ENCODE measurements at regions of chr19 and their contacts with region 1.

Region 1: DNA sequence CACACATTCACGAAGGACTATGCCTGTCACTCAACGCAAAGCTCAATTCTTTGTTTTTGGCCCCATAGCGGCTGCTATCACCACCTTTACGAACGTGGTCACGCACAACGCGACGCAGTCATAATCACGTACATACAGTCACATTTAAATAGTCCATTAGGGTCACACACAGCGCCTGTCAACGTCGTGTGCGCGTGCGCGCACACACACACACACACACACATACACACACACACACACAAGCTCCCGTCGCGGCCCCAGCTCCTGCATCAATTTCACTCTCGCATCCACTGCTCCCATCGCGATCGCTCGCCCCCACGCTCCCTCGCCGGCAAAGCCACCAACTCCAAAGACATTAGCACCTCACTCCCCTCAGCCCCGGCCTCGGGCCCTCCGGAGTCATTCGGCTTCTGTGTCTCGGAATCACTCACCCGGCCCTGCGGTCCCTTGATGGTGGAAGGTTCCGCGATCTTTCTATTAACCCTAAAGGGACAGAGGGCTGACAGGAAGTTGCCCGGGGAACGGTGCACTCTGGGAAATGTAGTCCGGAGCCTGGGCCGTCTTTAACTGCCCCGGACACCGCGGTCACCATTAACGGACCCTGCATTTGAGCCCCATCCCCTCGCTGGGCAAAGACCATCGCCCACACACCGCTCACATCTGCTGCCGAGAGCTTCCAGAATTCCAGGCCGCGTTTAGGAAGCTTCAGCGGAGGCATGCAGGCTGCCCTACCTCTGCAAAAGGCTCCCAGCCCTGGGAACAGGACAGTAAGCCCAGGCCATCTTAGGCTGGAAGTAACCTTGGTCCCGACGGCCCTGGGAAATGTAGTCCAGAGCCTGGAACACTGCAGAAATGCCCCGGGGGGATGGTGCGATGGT is at the start of gene ZNF790:
- DNase-seq: peak; percentile 94
- H3K4me3 ChIP-seq: peak within 1 kb of the TSS; percentile 58 to 82 (median 71)
- H3K27ac ChIP-seq: peak within 1 kb of the TSS; percentile 82 to 90 (median 88)
- H3K4me1 ChIP-seq: peaks cover 0 to 20% (median 14%) of the 10 kb centered on the region in 4 donors
- H3K27me3 ChIP-seq: no peaks in the 10 kb centered on the region
- CTCF ChIP-seq: no peak
- EP300 ChIP-seq: no peak
- POLR2A ChIP-seq: peak in 1 of 2 donors; percentile 17
- total RNA-seq, gene ZNF790: 8.6 to 13.3 (median 9.6) TPM

Region 2: GRCh38 chr19:36665832-36666231 is 172.3 kb before region 1 on chr19:
- intact Hi-C with region 1: loop called (anchors 10 kb)
- DNase-seq: no peak
- H3K4me3 ChIP-seq: peak overlapping the region; percentile 66 to 86 (median 76)
- H3K27ac ChIP-seq: no peak overlapping the region
- H3K4me1 ChIP-seq: peaks cover 0 to 21% (median 17%) of the 10 kb centered on the region in 4 donors
- H3K27me3 ChIP-seq: no peaks in the 10 kb centered on the region
- CTCF ChIP-seq: no peak
- EP300 ChIP-seq: no peak
- POLR2A ChIP-seq: no peak

Region 3: DNA sequence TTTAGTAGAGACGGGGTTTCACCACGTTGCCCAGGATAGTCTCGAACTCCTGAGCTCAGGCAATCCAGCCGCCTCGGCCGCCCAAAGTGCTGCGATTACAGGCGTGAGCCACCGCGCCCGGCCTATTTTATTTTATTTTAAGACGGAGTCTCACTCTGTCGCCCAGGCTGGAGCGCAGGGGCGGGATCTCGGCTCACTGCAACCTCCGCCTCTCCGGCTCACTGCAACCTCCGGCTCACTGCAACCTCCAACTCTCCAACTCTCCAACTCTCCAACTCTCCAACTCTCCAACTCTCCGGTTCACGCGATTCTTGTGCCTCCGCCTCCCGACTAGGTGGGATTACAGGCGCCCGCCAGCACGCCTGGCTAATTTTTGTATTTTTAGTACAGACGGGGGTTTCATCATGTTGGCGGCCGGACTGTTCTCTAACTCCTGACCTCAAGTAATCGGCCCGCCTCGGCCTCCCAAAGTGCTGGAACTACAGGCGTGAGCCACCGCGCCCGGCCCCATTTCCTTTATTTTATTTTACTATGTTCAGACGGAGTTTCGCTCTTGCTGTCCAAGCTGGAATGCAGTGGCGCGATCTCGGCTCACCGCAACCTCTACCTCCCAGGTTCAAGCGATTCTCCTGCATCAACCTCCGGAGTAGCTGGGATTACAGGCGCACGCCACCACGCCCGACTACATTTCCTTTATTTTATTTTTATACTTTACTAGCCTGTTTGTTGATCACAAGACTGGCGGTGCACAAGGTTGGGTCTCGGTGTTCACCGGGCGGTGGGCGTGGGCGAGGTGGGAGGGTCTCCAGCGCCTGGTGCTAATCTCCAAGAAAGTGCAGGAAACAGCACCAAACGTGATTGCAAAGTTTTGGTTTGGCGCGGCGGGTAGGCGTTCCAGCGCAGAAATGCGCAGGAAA is 41.8 kb before region 1 on chr19:
- intact Hi-C with region 1: loop called (anchors 5 kb)
- DNase-seq: no peak
- H3K4me3 ChIP-seq: peak overlapping the region; percentile 63 to 83 (median 74)
- H3K27ac ChIP-seq: peak overlapping the region; percentile 70 to 78 (median 78)
- H3K4me1 ChIP-seq: peaks cover 0 to 18% (median 7%) of the 10 kb centered on the region in 4 donors
- H3K27me3 ChIP-seq: no peaks in the 10 kb centered on the region
- CTCF ChIP-seq: no peak
- EP300 ChIP-seq: no peak
- POLR2A ChIP-seq: no peak

Region 4: GRCh38 chr19:36850559-36851442 is 12.7 kb after region 1 on chr19 and contains the start of gene ZNF345:
- intact Hi-C with region 1: loop called (anchors 1 kb)
- DNase-seq: peak; percentile 95
- H3K4me3 ChIP-seq: peak within 1 kb of the TSS; percentile 58 to 77 (median 70)
- H3K27ac ChIP-seq: peak within 1 kb of the TSS; percentile 88 to 92 (median 90)
- H3K4me1 ChIP-seq: peaks cover 0 to 22% (median 17%) of the 10 kb centered on the region in 4 donors
- H3K27me3 ChIP-seq: no peaks in the 10 kb centered on the region
- CTCF ChIP-seq: no peak
- EP300 ChIP-seq: no peak
- POLR2A ChIP-seq: peak in 1 of 2 donors; percentile 37
- total RNA-seq, gene ZNF345: 4.6 to 13.0 (median 6.2) TPM

Region 5: DNA sequence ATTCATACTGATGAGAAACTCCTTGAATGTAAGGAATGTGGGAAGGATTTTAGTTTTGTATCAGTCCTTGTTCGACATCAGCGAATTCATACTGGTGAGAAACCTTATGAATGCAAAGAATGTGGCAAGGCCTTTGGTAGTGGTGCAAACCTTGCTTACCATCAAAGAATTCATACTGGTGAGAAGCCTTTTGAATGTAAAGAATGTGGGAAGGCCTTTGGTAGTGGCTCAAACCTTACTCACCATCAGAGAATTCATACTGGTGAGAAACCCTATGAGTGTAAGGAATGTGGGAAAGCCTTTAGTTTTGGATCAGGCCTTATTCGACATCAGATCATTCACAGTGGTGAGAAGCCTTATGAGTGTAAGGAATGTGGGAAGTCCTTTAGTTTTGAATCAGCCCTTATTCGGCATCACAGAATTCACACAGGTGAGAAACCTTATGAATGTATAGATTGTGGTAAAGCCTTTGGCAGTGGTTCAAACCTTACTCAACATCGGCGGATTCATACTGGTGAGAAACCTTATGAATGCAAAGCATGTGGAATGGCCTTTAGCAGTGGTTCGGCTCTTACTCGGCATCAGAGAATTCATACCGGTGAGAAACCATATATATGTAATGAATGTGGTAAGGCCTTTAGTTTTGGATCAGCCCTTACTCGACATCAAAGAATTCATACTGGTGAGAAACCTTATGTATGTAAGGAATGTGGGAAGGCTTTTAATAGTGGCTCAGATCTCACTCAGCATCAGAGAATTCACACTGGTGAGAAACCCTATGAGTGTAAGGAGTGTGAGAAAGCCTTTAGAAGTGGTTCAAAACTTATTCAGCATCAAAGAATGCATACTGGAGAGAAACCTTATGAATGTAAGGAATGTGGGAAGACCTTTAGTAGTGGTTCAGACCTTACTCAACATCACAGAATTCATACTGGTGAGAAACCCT is 39.1 kb after region 1 on chr19:
- intact Hi-C with region 1: no loop called
- DNase-seq: no peak
- H3K4me3 ChIP-seq: no peak overlapping the region
- H3K27ac ChIP-seq: no peak overlapping the region
- H3K4me1 ChIP-seq: no peaks in the 10 kb centered on the region
- H3K27me3 ChIP-seq: no peaks in the 10 kb centered on the region
- CTCF ChIP-seq: no peak
- EP300 ChIP-seq: no peak
- POLR2A ChIP-seq: no peak

Region 6: GRCh38 chr19:37077934-37078725 is 240.0 kb after region 1 on chr19 and contains the start of gene ZNF420:
- intact Hi-C with region 1: loop called (anchors 5 kb)
- DNase-seq: peak; percentile 97
- H3K4me3 ChIP-seq: peak within 1 kb of the TSS; percentile 58 to 82 (median 74)
- H3K27ac ChIP-seq: peak within 1 kb of the TSS; percentile 86 to 91 (median 88)
- H3K4me1 ChIP-seq: peaks cover 0 to 20% (median 14%) of the 10 kb centered on the region in 4 donors
- H3K27me3 ChIP-seq: no peaks in the 10 kb centered on the region
- CTCF ChIP-seq: no peak
- EP300 ChIP-seq: peak in 1 of 4 donors; percentile 4
- POLR2A ChIP-seq: peak in 1 of 2 donors; percentile 53
- total RNA-seq, gene ZNF420: 8.4 to 18.6 (median 14.1) TPM

Measured in sigmoid colon (tissue), 7 donors.